Mammary epithelial cell (primary cell): ENCODE measurements at regions of chr11 and their contacts with region 1.

Region 1: GRCh38 chr11:124080327-124081001 is 34.8 kb upstream of the VWA5A start:
- DNase-seq: peak; percentile 88
- H3K4me3 ChIP-seq: no peak overlapping the region
- H3K27ac ChIP-seq: peak overlapping the region; percentile 40
- H3K4me1 ChIP-seq: peaks cover 31% of the 10 kb centered on the region
- H3K27me3 ChIP-seq: no peaks in the 10 kb centered on the region
- CTCF ChIP-seq: no peak

Region 2: DNA sequence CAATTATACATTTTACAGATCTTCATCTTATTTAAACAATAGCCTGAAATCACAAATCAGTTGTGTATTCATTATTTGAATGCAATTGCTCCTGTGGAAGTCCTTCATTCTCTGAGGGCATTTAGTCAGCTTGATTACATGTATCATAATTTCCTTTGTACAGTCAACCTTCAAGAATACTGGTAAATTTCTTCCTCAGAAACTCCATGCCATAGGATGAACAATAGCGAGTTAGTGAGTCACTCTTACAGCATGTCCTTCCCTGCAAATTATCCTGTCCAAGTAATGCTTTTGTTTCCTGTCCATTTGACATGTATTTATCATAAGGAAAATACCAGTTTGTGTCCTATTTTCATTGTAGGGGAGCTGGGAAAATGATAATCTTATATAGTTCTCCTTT is 106.6 kb before region 1 on chr11:
- CTCF ChIA-PET with region 1: no interaction called
- dilution Hi-C with region 1: no loop called
- in situ Hi-C with region 1: no loop called
- intact Hi-C with region 1: loop called (anchors 5 kb)
- DNase-seq: peak; percentile 93
- H3K4me3 ChIP-seq: no peak overlapping the region
- H3K27ac ChIP-seq: peak overlapping the region; percentile 98
- H3K4me1 ChIP-seq: peaks cover 42% of the 10 kb centered on the region
- H3K27me3 ChIP-seq: no peaks in the 10 kb centered on the region
- CTCF ChIP-seq: no peak

Region 3: DNA sequence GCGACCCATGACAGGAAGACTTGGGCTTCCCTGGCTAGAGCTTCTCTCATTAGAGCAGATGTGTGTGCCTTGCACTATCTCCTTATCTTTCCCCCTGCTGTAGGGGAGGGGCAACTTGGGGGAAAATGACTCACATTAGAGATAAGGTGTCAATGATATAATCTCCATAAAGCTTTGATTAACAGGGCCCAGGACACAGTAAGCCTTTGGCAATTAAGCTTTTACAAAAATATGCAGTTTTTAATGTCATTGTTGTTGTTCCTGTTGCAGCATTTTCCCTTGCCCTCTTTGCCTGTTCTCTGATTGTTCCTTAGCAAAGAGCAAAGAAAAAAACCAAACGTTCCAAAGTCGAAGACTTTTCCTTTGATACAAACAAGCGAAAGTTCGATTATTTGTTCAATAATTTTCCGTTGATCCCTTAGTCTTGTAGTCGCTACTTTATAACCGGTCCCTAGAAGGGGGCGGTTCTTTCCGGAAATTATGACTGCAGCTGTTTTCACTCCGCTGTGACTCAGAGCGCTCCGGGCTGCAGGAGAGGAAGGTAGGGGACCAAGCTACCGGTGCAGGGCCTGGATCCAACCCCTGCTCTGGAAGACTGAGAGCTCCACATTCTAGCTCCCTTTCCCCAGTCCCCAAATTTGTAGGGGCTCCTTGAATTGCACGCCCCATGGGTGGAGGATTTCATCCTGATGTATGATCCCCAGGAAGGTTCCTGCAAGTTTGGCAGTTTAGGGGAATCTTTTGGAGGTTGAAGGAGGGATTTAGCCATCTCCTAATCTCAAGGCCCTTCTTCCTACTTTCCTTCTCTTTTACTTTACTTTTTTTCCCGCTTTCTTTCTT is 34.7 kb after region 1 on chr11 and contains the start of gene VWA5A:
- CTCF ChIA-PET with region 1: no interaction called
- dilution Hi-C with region 1: no loop called
- in situ Hi-C with region 1: no loop called
- intact Hi-C with region 1: loop called (anchors 1 kb)
- DNase-seq: peak; percentile 90
- H3K4me3 ChIP-seq: peak within 1 kb of the TSS; percentile 61 to 86 (median 71)
- H3K27ac ChIP-seq: peak within 1 kb of the TSS; percentile 27
- H3K4me1 ChIP-seq: peaks cover 12% of the 10 kb centered on the region
- H3K27me3 ChIP-seq: no peaks in the 10 kb centered on the region
- CTCF ChIP-seq: no peak
- total RNA-seq, gene VWA5A: 24.7 to 35.2 TPM